ENCODE measurements at regions of chr16 and their contacts with region 1.

Region 1: DNA sequence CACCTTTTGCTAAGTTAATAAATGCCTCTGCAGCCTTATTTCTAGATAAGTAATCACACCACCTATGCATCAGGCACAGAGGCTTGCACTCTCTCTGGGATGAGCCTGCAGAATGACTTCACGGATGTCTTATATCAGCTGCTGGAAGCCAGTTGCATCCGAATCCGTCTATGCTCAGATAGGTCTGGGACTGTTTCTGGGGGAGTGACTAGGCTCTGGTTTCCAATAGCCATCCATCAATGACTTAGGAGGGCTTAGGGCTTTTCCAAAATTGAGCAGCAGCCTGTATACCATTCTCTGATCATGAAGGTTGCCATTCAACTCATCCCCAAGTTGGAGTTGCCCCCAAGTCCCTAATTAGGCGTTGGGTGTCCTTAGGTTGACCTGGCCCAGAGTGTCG is 113.3 kb upstream of the ERCC4 start:
- DNase-seq: no peak
- H3K4me3 ChIP-seq: no peak overlapping the region
- H3K27ac ChIP-seq: no peak overlapping the region
- H3K4me1 ChIP-seq: no peaks in the 10 kb centered on the region
- H3K27me3 ChIP-seq: no peaks in the 10 kb centered on the region
- CTCF ChIP-seq: no peak
- POLR2A ChIP-seq: no peak

Region 2: DNA sequence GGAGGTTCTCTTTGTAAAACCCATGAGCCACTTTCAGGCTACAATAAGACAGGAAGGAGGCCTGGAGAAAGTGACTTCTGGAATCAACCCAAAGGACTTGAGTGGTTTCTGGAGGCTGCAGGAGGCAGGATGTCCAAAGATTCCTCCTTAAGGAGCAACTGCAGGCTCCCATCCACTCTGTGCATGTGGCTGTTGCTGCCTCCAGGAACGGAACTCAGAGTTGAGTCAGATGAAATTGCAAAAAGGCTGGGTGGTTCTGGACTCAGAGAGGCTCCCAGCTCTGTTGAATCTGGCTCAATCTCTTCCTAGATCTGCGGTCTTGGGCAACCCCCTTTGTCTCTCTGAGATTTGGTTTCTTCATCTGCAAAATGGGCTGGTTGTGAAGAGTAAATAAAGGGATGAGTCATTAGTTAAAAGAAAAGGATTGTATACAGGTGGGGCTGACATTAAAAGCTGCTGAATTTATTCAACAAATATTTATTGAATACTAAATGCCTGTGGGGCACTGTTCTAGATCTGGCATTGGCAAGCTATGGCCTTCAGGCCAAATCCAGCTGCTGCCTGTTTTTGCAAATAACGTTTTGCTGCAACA is 708.0 kb before region 1 on chr16:
- intact Hi-C with region 1: no loop called
- DNase-seq: no peak
- H3K4me3 ChIP-seq: no peak overlapping the region
- H3K27ac ChIP-seq: no peak overlapping the region
- H3K4me1 ChIP-seq: no peaks in the 10 kb centered on the region
- H3K27me3 ChIP-seq: no peaks in the 10 kb centered on the region
- CTCF ChIP-seq: no peak
- POLR2A ChIP-seq: no peak

Region 3: DNA sequence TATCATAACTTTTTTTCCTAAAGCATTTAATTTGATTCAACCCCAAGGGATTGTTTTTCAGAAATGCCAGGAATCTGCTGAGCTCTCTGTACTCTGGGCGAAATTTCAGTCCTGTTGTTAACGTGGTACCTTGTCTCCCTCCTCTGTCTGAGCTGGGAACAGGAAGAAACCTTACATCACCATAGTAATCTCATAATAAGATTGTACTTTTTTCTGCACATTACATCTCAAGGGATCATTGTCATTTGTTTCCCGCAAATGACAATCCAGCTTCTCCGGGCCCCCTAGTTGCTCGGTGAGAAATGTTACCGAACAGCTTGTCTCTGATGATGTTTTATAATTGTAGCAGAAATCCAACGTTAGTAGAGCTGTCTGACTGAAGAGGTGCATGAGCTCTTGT is 39.5 kb before region 1 on chr16:
- intact Hi-C with region 1: no loop called
- DNase-seq: no peak
- H3K4me3 ChIP-seq: no peak overlapping the region
- H3K27ac ChIP-seq: no peak overlapping the region
- H3K4me1 ChIP-seq: no peaks in the 10 kb centered on the region
- H3K27me3 ChIP-seq: peaks cover 0 to 3% of the 10 kb centered on the region in 2 donors
- CTCF ChIP-seq: peak in 2 of 3 donors; percentile 20 to 23
- POLR2A ChIP-seq: no peak

Region 4: DNA sequence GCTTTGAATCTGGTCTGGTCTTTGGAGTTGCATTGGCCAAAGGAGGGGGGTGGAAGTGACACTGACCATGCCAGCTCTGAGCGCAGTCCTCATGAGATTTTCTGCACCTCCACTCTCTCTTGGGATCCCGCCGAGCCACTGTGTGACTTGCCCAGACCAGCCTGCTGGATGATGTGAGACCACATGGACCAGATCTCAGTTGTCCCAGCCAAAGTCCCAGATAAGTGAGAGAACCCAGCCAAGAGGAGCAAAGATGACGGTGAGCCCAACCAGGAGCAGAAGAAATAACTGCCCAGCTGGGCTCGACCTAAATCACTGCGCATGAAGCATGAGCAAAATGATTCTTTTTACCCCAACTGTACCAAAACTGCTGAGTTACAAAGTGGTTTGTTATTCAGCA is 16.8 kb after region 1 on chr16:
- intact Hi-C with region 1: loop called (anchors 2 kb)
- DNase-seq: no peak
- H3K4me3 ChIP-seq: no peak overlapping the region
- H3K27ac ChIP-seq: no peak overlapping the region
- H3K4me1 ChIP-seq: no peaks in the 10 kb centered on the region
- H3K27me3 ChIP-seq: no peaks in the 10 kb centered on the region
- CTCF ChIP-seq: no peak
- POLR2A ChIP-seq: no peak